ENCODE measurements at regions of chr1 and their contacts with region 1.

Region 1: DNA sequence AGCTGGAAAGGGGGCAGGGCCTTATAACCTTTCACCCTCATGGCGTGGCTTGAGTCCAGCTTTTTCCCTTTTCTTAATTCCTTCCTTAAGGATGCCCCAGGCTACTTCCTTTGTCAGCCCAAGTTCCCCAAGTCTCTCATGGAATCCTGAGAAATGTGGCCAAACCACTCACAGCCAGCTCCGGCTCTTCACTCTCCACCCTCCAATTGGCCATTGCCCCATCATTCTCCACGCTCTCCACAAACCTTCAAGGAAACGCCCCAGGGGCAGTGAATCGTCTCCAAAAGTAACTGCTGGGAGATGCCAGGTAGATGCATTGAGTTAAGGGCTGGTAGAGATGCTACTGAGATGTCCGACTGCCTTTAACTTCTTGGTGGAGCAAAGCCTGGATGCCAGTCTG is 113.5 kb upstream of the CD34 start:
- DNase-seq: no peak
- H3K4me3 ChIP-seq: no peak overlapping the region
- H3K27ac ChIP-seq: no peak overlapping the region
- H3K4me1 ChIP-seq: peaks cover 13% of the 10 kb centered on the region
- H3K27me3 ChIP-seq: no peaks in the 10 kb centered on the region
- CTCF ChIP-seq: no peak

Region 2: DNA sequence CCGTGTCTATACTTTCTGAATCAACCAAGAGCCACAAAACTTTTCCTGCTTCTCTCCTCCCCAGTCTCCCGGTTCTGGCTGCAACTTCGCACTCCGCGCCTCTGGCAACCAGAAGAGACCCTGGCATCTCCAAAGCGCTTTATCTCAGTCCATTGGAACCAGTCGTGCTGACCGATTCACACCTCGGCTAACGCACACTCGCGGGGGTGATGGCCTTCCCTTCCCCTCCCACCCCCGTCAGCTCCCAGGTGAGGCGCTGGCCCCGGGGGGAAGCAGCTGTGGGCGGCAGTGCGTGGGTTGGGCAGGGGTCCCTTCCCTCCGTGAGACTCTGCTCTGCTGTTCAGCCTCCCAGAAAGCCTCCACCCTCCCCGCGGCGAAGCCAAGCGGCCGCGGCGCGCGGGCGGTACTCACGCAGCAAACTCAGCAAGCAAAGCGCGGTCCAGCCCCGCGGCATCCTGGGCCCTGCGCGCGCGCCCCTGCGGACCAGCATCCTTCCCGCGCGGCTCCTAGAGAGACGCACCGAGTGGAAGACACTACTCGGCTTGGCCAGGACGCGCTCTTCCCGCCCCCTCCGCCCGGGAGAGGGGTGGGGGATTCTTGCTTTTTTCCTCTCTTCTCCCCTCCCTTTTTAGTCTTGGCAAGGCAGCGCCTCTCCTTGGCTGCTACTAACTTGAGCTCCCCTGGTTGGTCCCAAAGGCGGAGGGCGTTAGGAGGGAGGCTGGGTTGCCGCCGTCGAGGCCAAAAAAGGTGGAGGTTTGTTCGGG is 113.6 kb before region 1 on chr1 and contains the start of gene CD34:
- intact Hi-C with region 1: no loop called
- DNase-seq: peak; percentile 85
- H3K4me3 ChIP-seq: peak within 1 kb of the TSS; percentile 77
- H3K27ac ChIP-seq: peak within 1 kb of the TSS; percentile 95
- H3K4me1 ChIP-seq: peaks cover 58% of the 10 kb centered on the region
- H3K27me3 ChIP-seq: peaks cover 11% of the 10 kb centered on the region
- CTCF ChIP-seq: no peak
- total RNA-seq, gene CD34: 69.6 TPM

Region 3: DNA sequence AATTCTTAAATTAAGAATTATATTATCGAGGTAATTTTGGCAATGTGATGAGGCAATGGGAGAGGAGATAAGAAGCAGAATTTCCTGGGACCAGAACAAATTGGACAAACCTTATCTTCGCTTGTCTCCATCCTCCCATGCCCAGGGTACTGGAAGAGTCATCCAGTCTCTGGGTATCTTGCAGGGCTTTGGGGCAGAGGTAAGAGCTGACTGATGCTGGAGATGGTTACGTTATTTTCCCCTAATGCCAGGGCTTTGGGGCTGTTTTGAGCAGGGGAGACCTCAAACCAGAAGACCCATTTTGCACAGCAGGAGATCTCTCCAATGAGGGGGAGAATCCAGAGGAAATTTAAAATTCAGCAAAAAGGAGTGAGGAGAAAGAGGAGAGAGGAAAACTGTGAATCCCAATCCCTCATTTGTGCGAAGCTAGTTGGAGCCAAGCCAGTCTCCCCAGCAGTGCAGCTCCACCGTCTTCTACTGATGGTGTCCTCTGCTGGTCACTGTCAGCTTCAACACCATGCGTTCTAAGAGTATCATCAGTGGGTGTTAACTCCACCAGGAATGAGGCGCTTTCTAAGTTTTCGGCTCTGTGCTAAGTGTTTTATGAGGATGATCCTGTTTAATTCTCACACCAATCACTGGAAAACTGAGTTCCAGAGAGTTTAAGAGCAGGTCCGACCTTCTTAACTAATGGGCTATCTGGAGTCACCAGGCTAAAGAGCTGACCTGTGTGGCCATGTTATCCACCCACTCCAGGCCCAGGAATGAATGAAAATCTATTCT is 26.7 kb before region 1 on chr1:
- intact Hi-C with region 1: no loop called
- DNase-seq: peak; percentile 71
- H3K4me3 ChIP-seq: no peak overlapping the region
- H3K27ac ChIP-seq: no peak overlapping the region
- H3K4me1 ChIP-seq: peaks cover 4% of the 10 kb centered on the region
- H3K27me3 ChIP-seq: no peaks in the 10 kb centered on the region
- CTCF ChIP-seq: peak; percentile 91

Region 4: GRCh38 chr1:208093754-208094719 is 69.6 kb after region 1 on chr1:
- intact Hi-C with region 1: loop called (anchors 5 kb)
- DNase-seq: peak; percentile 73
- H3K4me3 ChIP-seq: no peak overlapping the region
- H3K27ac ChIP-seq: no peak overlapping the region
- H3K4me1 ChIP-seq: peaks cover 21% of the 10 kb centered on the region
- H3K27me3 ChIP-seq: no peaks in the 10 kb centered on the region
- CTCF ChIP-seq: peak; percentile 84

Measured in left ventricle myocardium inferior (tissue), 1 donor.